SK-N-SH (cell line): ENCODE measurements at regions of chr18 and their contacts with region 1.

Region 1: GRCh38 chr18:73842795-73843394 is 304.7 kb downstream of the FBXO15 start:
- DNase-seq: peak; percentile 49
- H3K4me3 ChIP-seq: peak overlapping the region in 1 of 2 experiments; percentile 49; a peak in 2 of 4 replicates
- H3K27ac ChIP-seq: no peak overlapping the region
- H3K4me1 ChIP-seq: no peaks in the 10 kb centered on the region
- H3K27me3 ChIP-seq: peaks cover 14% of the 10 kb centered on the region; the same call in 1 of the 2 replicates
- CTCF ChIP-seq: peak; percentile 97
- EP300 ChIP-seq: no peak
- RAD21 ChIP-seq: peak; percentile 77

Region 2: GRCh38 chr18:73340135-73340934 is 502.6 kb before region 1 on chr18:
- CTCF ChIA-PET with region 1: no interaction called
- POLR2A ChIA-PET with region 1: no interaction called
- DNase-seq: no peak
- H3K4me3 ChIP-seq: peak overlapping the region; percentile 19 to 45; a peak in 3 of 4 replicates
- H3K27ac ChIP-seq: no peak overlapping the region
- H3K4me1 ChIP-seq: no peaks in the 10 kb centered on the region
- H3K27me3 ChIP-seq: no peaks in the 10 kb centered on the region
- CTCF ChIP-seq: no peak
- EP300 ChIP-seq: no peak
- RAD21 ChIP-seq: no peak

Region 3: DNA sequence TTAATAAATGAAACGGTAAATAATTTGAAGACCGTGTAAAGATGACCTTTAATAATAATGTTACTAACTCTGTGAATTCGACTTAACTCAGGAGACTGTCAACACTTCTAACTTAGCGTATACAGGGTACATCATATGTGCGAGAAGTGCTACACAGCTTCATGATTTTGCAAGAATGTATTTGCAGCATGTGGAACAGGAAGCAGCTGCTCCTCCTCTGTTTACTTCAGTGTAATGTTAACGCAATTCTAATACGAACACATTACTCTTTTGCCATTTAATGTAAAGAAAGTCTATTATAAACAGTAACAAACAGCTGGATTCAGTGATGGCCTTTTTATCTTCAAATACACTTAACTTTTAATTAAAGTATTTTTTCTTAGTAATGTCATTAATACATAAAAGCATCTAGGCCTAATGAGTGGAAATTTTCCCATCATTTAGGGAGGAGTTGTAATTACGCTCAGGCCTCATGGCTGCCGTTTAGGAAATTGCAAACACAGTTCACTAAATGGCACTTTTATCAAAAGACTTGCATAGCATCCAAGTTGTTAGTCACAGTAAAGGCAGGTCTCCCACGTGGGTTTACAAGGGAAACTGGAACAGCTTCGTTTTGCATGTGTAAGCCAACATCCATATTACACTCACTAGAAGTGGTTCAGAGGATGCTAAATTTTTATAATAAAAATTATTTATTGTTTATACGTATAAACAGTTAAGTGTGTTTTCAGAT is 331.0 kb before region 1 on chr18:
- CTCF ChIA-PET with region 1: no interaction called
- POLR2A ChIA-PET with region 1: no interaction called
- DNase-seq: no peak
- H3K4me3 ChIP-seq: no peak overlapping the region
- H3K27ac ChIP-seq: no peak overlapping the region; a peak in 1 of 4 replicates
- H3K4me1 ChIP-seq: no peaks in the 10 kb centered on the region; a peak in 2 of 4 replicates
- H3K27me3 ChIP-seq: no peaks in the 10 kb centered on the region
- CTCF ChIP-seq: no peak
- EP300 ChIP-seq: no peak
- RAD21 ChIP-seq: no peak

Region 4: GRCh38 chr18:73827801-73828200 is 15.1 kb before region 1 on chr18:
- CTCF ChIA-PET with region 1: interaction called, 14 read pairs
- POLR2A ChIA-PET with region 1: no interaction called
- DNase-seq: no peak
- H3K4me3 ChIP-seq: peak overlapping the region in 1 of 2 experiments; percentile 27; a peak in 1 of 4 replicates
- H3K27ac ChIP-seq: no peak overlapping the region
- H3K4me1 ChIP-seq: no peaks in the 10 kb centered on the region; a peak in 1 of 4 replicates
- H3K27me3 ChIP-seq: peaks cover 9% of the 10 kb centered on the region; the same call in 1 of the 2 replicates
- CTCF ChIP-seq: no peak
- EP300 ChIP-seq: no peak
- RAD21 ChIP-seq: no peak

Region 5: GRCh38 chr18:73852789-73853549 is 10.1 kb after region 1 on chr18:
- CTCF ChIA-PET with region 1: interaction called, 12 read pairs
- POLR2A ChIA-PET with region 1: no interaction called
- DNase-seq: no peak
- H3K4me3 ChIP-seq: no peak overlapping the region
- H3K27ac ChIP-seq: no peak overlapping the region
- H3K4me1 ChIP-seq: no peaks in the 10 kb centered on the region
- H3K27me3 ChIP-seq: peaks cover 31% of the 10 kb centered on the region
- CTCF ChIP-seq: no peak
- EP300 ChIP-seq: no peak
- RAD21 ChIP-seq: no peak

Region 6: DNA sequence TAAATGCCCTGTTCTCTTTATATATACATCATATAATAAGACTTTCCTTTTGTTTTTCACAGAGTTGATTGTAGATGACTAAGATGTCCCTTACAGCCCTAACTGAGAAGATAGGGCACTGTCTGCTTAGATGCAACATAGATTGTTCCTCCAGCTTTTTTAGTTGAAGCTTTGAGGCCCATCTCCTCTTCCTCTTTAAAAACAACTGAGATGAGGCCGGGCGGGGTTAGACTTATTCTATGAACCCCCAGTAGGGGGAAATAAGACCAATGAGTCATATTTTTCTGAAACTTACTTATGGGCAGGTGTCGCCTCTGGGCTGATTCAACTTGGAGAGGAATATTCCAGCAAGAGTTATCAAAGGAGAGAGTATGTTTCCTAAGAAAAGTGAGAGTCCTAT is 220.1 kb after region 1 on chr18:
- CTCF ChIA-PET with region 1: no interaction called
- POLR2A ChIA-PET with region 1: no interaction called
- DNase-seq: no peak
- H3K4me3 ChIP-seq: no peak overlapping the region
- H3K27ac ChIP-seq: no peak overlapping the region
- H3K4me1 ChIP-seq: no peaks in the 10 kb centered on the region
- H3K27me3 ChIP-seq: peaks cover 11% of the 10 kb centered on the region; the same call in 1 of the 2 replicates
- CTCF ChIP-seq: no peak
- EP300 ChIP-seq: no peak
- RAD21 ChIP-seq: no peak